ENCODE measurements at regions of chr3 and their contacts with region 1.

Region 1: DNA sequence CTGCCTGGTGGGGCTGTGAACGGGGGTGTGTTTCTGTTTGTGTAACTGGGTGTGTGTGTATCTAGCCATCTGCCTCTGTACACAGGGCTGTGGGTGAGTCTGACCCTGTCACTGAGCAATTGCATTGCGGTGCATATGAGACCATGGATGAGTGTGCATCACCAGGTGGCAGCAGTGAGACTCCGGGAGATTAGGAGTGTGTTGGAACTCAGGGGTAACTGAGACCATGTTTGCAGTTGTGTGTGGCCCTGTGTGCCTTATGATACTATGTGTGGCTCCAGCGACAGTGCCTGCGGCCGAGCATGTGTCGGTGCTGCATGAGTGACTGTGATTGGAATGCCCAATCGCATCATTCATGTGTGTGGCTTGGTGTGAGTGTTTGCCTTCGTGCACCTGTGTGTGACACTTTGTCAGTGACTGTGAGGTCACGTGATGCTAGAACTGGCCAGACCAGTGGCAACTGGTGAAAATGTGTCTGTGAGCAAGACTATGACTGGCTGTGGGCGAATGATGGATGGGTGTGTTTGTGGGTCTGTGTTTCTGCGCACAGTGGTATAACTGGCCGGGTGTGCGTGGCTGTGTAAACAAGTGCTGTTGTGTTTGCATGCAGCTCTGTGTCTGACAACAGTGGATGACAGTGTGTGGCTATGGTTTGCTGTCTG is 14.0 kb downstream of the VILL start:
- DNase-seq: peak; percentile 78 to 83
- H3K4me3 ChIP-seq: no peak overlapping the region
- H3K27ac ChIP-seq: no peak overlapping the region
- H3K4me1 ChIP-seq: peaks cover 0 to 19% (median 0%) of the 10 kb centered on the region in 4 donors
- H3K27me3 ChIP-seq: no peaks in the 10 kb centered on the region
- CTCF ChIP-seq: peak; percentile 55 to 60

Region 2: GRCh38 chr3:37855363-37855970 is 149.1 kb before region 1 on chr3:
- intact Hi-C with region 1: loop called (anchors 10 kb)
- DNase-seq: peak; percentile 87 to 89
- H3K4me3 ChIP-seq: no peak overlapping the region
- H3K27ac ChIP-seq: no peak overlapping the region
- H3K4me1 ChIP-seq: peaks cover 0 to 25% (median 18%) of the 10 kb centered on the region in 4 donors
- H3K27me3 ChIP-seq: no peaks in the 10 kb centered on the region
- CTCF ChIP-seq: peak; percentile 87 to 94

Region 3: GRCh38 chr3:38039101-38039898 is 34.8 kb after region 1 on chr3 and contains the start of gene DLEC1:
- intact Hi-C with region 1: loop called (anchors 5 kb)
- DNase-seq: peak; percentile 56 to 77
- H3K4me3 ChIP-seq: peak within 1 kb of the TSS; percentile 47 to 55
- H3K27ac ChIP-seq: peak within 1 kb of the TSS; percentile 2 to 11
- H3K4me1 ChIP-seq: peaks cover 0 to 14% (median 10%) of the 10 kb centered on the region in 4 donors
- H3K27me3 ChIP-seq: no peaks in the 10 kb centered on the region
- CTCF ChIP-seq: no peak

Region 4: GRCh38 chr3:38229036-38229435 is 224.5 kb after region 1 on chr3:
- intact Hi-C with region 1: no loop called
- DNase-seq: no peak
- H3K4me3 ChIP-seq: no peak overlapping the region
- H3K27ac ChIP-seq: peak overlapping the region in 1 of 2 donors; percentile 17
- H3K4me1 ChIP-seq: peaks cover 0 to 16% (median 4%) of the 10 kb centered on the region in 4 donors
- H3K27me3 ChIP-seq: no peaks in the 10 kb centered on the region
- CTCF ChIP-seq: no peak

Measured in tibial artery (tissue), 4 donors.